ENCODE measurements at regions of chr4 and their contacts with region 1.

Region 1: DNA sequence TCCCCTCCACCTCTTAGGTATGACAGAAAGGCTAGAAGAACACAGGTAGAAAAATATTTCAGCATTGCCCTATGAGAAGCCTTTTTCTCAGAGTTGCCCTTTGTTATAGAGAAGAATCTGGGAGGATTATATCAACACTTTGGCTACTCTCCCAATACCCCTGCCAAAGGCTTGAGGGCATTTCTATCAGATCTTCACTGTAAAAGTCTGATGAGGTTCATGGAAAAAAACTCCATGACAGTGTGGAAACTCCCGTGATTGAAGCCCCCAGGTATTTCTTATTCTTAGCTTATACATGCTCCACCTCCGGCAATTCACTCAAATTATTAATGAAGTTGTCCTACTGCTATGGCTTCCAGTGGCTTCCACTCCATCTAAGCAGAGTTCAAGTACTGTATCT is 753.6 kb downstream of the CENPC start:
- DNase-seq: no peak
- H3K4me3 ChIP-seq: no peak overlapping the region
- CTCF ChIP-seq: no peak

Region 2: GRCh38 chr4:66750273-66750672 is 41.4 kb before region 1 on chr4:
- in situ Hi-C with region 1: loop called (anchors 5 kb)
- DNase-seq: peak; percentile 12
- H3K4me3 ChIP-seq: no peak overlapping the region
- CTCF ChIP-seq: no peak

Region 3: DNA sequence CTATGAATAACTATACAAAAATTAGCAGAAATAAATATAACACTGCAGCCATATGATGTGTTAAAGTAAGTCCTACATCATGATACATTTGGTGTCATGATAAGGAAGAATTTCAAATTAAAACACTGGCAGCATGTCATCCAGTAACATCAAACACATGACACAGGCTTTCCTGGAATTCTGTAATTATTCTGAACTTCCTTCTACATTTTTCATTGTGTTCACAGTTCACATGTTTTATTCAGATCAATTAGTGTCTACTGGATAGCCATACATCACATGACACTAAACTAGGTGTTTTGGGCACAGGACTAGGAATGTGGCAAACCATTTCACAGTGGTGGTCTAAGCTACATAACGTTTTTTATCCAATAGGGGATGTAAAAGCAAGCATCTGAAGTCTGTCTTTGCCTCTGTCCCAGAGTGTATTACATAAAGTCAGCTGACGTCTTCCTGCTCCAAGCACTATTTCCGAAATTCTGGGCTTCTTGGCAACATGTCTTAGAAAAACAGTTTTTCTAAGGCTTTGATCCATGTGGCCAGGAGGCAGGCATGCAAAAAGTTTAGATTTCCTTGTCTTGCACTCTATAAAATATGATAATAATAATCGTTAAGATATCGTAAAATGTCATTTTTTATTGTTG is 45.7 kb after region 1 on chr4:
- in situ Hi-C with region 1: no loop called
- DNase-seq: no peak
- H3K4me3 ChIP-seq: no peak overlapping the region
- CTCF ChIP-seq: no peak

Region 4: DNA sequence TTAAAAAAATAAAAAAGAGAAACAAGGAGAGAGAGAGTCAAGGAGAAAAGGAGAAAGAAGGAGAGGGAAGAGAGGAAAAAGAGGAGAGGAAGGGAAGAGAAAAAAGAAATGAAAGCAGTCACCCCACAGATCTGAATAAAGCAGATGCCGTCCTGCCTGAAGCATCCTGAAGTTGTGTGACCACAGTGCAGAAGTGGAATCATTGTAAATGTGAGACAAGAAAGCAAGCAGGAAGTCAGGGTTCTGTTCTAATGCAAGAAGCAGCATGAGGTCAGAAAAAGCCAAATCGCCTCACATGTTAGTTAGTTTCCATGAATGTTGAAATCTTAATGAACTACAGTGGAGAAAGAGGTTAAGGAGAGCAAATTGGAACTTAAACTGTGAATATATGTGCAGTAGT is 61.2 kb after region 1 on chr4:
- in situ Hi-C with region 1: loop called (anchors 5 kb)
- DNase-seq: no peak
- H3K4me3 ChIP-seq: no peak overlapping the region
- CTCF ChIP-seq: no peak

Measured in astrocyte of the cerebellum (primary cell).